ENCODE measurements at regions of chr2 and their contacts with region 1.

Region 1: DNA sequence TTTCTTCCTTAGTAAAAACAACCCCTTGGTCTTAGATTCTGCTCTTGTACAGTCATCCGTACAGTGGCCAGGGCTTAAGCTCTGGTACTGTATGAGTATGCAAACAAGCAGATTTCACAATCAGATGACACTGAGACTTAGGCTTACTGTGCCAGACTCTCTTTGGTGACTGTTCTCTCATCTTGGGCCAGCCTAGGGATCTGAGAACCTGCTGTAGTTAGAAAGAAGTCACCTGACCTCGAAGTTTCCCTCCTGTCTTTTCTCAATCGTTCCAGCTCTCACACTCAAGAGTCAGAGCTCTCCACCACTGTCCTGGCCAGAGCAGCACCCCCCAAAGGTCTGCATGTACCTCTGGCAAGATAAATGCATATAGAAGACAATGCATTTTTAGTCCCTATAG is 63.2 kb downstream of the ZEB2 start:
- DNase-seq: peak in 1 of 2 donors; percentile 70
- H3K4me3 ChIP-seq: no peak overlapping the region
- H3K27ac ChIP-seq: peak overlapping the region in 1 of 2 donors; percentile 43
- H3K4me1 ChIP-seq: peaks cover 11 to 63% of the 10 kb centered on the region in 2 donors
- H3K27me3 ChIP-seq: no peaks in the 10 kb centered on the region
- CTCF ChIP-seq: no peak

Region 2: GRCh38 chr2:143489145-143489544 is 967.5 kb before region 1 on chr2:
- intact Hi-C with region 1: loop called (anchors 10 kb)
- DNase-seq: no peak
- H3K4me3 ChIP-seq: peak overlapping the region in 1 of 2 donors; percentile 27
- H3K27ac ChIP-seq: peak overlapping the region; percentile 16 to 22
- H3K4me1 ChIP-seq: peaks cover 0 to 3% of the 10 kb centered on the region in 2 donors
- H3K27me3 ChIP-seq: no peaks in the 10 kb centered on the region
- CTCF ChIP-seq: no peak